Psoas muscle (tissue), 8 donors: ENCODE measurements at regions of chr14 and their contacts with region 1.

Region 1: GRCh38 chr14:59964251-59965007 is 44.5 kb downstream of the LRRC9 start:
- DNase-seq: no peak
- ATAC-seq: peak; percentile 29 to 65 (median 47)
- H3K4me3 ChIP-seq: peak overlapping the region; percentile 62
- H3K27ac ChIP-seq: peak overlapping the region; percentile 76
- H3K4me1 ChIP-seq: no peaks in the 10 kb centered on the region
- H3K27me3 ChIP-seq: no peaks in the 10 kb centered on the region
- CTCF ChIP-seq: no peak

Region 2: DNA sequence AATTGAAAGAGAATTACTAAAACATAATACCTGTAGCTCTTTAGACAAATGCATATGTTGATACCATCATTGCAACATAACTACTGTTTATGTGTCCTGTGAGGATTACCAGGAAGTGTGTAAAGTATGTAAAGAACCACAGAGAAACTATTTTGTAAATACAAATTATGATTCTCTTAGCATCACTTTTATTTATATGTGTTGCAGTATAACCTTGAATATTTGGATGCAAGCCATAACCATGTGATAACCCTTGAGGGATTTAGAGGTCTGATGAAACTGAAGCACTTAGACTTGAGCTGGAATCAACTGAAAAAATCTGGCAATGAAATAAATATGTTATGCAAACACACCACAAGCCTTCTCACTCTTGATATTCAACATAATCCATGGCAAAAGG is 33.0 kb after region 1 on chr14:
- intact Hi-C with region 1: loop called in 1 of 2 experiments (anchors 2 kb)
- DNase-seq: no peak
- ATAC-seq: peak; percentile 76 to 94 (median 90)
- H3K4me3 ChIP-seq: peak overlapping the region; percentile 6
- H3K27ac ChIP-seq: peak overlapping the region; percentile 77
- H3K4me1 ChIP-seq: peaks cover 24% of the 10 kb centered on the region
- H3K27me3 ChIP-seq: no peaks in the 10 kb centered on the region
- CTCF ChIP-seq: no peak

Region 3: DNA sequence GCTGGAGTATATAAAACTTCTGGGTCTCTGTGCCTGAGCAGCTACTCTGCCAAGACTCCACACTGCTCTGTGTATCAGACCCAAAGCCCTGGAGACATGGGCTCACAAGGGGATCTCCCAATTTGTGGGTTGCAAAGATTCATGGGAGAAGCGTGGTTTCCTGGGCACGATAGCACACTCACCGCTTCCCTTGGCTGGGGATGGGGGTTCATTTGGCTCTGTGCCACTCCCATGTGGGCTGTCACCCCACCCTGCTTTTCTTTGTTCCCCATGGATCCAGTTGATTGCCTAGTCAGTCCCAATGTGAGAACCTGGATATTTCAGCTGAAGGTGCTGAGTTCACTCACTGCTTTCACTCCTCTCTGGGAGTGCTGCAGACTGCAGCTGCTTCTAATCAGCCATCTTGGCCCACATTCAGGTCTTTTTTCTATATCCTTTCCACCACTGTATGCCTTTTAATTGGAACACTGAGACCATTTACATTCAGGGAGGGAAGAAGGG is 87.3 kb after region 1 on chr14:
- intact Hi-C with region 1: loop called in 1 of 2 experiments (anchors 10 kb)
- DNase-seq: no peak
- ATAC-seq: no peak
- H3K4me3 ChIP-seq: no peak overlapping the region
- H3K27ac ChIP-seq: no peak overlapping the region
- H3K4me1 ChIP-seq: no peaks in the 10 kb centered on the region
- H3K27me3 ChIP-seq: no peaks in the 10 kb centered on the region
- CTCF ChIP-seq: no peak

Region 4: GRCh38 chr14:60064491-60065072 is 100.2 kb after region 1 on chr14:
- intact Hi-C with region 1: loop called (anchors 5 to 10 kb)
- DNase-seq: no peak
- ATAC-seq: peak in 3 of 4 donors; percentile 67 to 92 (median 75)
- H3K4me3 ChIP-seq: no peak overlapping the region
- H3K27ac ChIP-seq: no peak overlapping the region
- H3K4me1 ChIP-seq: no peaks in the 10 kb centered on the region
- H3K27me3 ChIP-seq: no peaks in the 10 kb centered on the region
- CTCF ChIP-seq: peak; percentile 78

Region 5: GRCh38 chr14:60091550-60092530 is 127.4 kb after region 1 on chr14 and contains the start of gene PCNX4:
- intact Hi-C with region 1: loop called in 1 of 2 experiments (anchors 10 kb)
- DNase-seq: peak; percentile 97 to 99
- ATAC-seq: peak; percentile 89 to 96 (median 94)
- H3K4me3 ChIP-seq: peak within 1 kb of the TSS; percentile 87
- H3K27ac ChIP-seq: peak within 1 kb of the TSS; percentile 97
- H3K4me1 ChIP-seq: peaks cover 29% of the 10 kb centered on the region
- H3K27me3 ChIP-seq: no peaks in the 10 kb centered on the region
- CTCF ChIP-seq: no peak
- total RNA-seq, gene PCNX4: 24.4 to 41.4 (median 38.5) TPM

Region 6: GRCh38 chr14:60184146-60184904 is 219.9 kb after region 1 on chr14:
- intact Hi-C with region 1: loop called (anchors 1 to 5 kb)
- DNase-seq: no peak
- ATAC-seq: peak in 2 of 4 donors; percentile 30 to 53
- H3K4me3 ChIP-seq: peak overlapping the region; percentile 65
- H3K27ac ChIP-seq: peak overlapping the region; percentile 69
- H3K4me1 ChIP-seq: peaks cover 28% of the 10 kb centered on the region
- H3K27me3 ChIP-seq: no peaks in the 10 kb centered on the region
- CTCF ChIP-seq: peak; percentile 91